K562 (cell line): ENCODE measurements at regions of chr2 and their contacts with region 1.

Region 1: GRCh38 chr2:85804583-85804982 is 50.8 kb downstream of the ATOH8 start:
- DNase-seq: peak; percentile 29 to 70 (median 66)
- ATAC-seq: peak; percentile 74
- H3K4me3 ChIP-seq: no peak overlapping the region
- H3K27ac ChIP-seq: no peak overlapping the region
- H3K4me1 ChIP-seq: no peaks in the 10 kb centered on the region
- H3K27me3 ChIP-seq: peaks cover 3 to 8% of the 10 kb centered on the region in 2 experiments; a peak in 3 of 5 replicates
- CTCF ChIP-seq: peak; percentile 55 to 70 (median 67)
- EP300 ChIP-seq: no peak
- POLR2A ChIP-seq: no peak
- RAD21 ChIP-seq: peak in 1 of 2 experiments; percentile 43; a peak in 2 of 4 replicates

Region 2: GRCh38 chr2:85728883-85729824 is 75.4 kb before region 1 on chr2:
- CTCF ChIA-PET with region 1: interaction called, 4 read pairs
- POLR2A ChIA-PET with region 1: no interaction called
- in situ Hi-C with region 1: no loop called
- intact Hi-C with region 1: loop called (anchors 2 kb)
- DNase-seq: peak; percentile 84 to 89 (median 86)
- ATAC-seq: peak; percentile 100
- H3K4me3 ChIP-seq: no peak overlapping the region
- H3K27ac ChIP-seq: no peak overlapping the region
- H3K4me1 ChIP-seq: peaks cover 0 to 4% of the 10 kb centered on the region in 2 experiments; a peak in 2 of 5 replicates
- H3K27me3 ChIP-seq: peaks cover 18 to 60% of the 10 kb centered on the region in 2 experiments
- CTCF ChIP-seq: peak; percentile 95 to 96 (median 95)
- EP300 ChIP-seq: no peak
- POLR2A ChIP-seq: no peak
- RAD21 ChIP-seq: peak; percentile 88 to 94